Mammary epithelial cell (primary cell): ENCODE measurements at regions of chr13 and their contacts with region 1.

Region 1: DNA sequence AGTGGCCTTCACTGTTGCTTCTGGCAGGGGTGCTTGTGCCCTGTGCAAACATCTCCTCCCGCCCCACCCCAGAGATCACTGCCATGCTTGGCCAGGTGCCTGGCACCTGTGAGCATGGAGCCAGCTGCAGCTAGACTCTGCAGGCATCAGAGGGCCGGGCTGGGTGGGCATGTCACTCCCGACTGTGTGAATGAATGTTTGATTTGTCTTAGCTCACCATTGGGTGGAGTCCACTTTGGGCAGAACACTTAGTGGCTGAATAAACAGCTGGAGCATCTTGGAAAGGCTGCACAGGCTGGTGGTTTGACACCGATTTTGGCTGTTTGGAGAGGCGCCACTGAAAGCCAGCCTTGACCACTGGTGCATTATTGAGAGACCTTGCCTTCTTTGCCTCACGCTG is 267.3 kb downstream of the DLEU7 start:
- DNase-seq: no peak
- H3K4me3 ChIP-seq: no peak overlapping the region
- H3K27ac ChIP-seq: no peak overlapping the region
- H3K4me1 ChIP-seq: no peaks in the 10 kb centered on the region
- H3K27me3 ChIP-seq: peaks cover 3% of the 10 kb centered on the region
- CTCF ChIP-seq: no peak

Region 2: DNA sequence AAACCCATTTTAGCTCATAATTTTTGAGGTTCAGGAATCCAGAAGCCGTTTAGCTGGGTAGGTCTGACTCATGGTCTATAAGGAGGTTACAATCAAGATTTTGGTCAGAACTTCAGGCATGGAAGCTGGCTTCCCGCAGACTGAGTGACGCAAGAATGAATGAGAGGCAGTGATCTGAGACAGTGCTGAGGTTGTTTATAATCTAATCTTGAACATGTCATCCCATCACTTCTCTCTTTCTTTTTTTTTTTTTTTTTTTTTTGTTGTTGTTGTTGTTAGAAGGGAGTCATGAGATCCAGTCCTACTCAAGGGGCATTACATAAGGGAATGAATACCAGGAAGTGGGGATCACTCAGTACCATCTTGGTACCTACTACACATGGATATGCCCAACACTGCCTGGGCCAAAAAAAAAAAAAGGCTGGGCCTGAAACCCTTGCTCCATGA is 50.0 kb after region 1 on chr13:
- CTCF ChIA-PET with region 1: interaction called, 42 read pairs
- dilution Hi-C with region 1: no loop called
- in situ Hi-C with region 1: no loop called
- intact Hi-C with region 1: no loop called
- DNase-seq: peak; percentile 51
- H3K4me3 ChIP-seq: no peak overlapping the region
- H3K27ac ChIP-seq: no peak overlapping the region
- H3K4me1 ChIP-seq: no peaks in the 10 kb centered on the region
- H3K27me3 ChIP-seq: no peaks in the 10 kb centered on the region
- CTCF ChIP-seq: no peak

Region 3: GRCh38 chr13:50668049-50668448 is 91.9 kb after region 1 on chr13:
- CTCF ChIA-PET with region 1: no interaction called
- dilution Hi-C with region 1: no loop called
- in situ Hi-C with region 1: no loop called
- intact Hi-C with region 1: no loop called
- DNase-seq: no peak
- H3K4me3 ChIP-seq: no peak overlapping the region
- H3K27ac ChIP-seq: no peak overlapping the region
- H3K4me1 ChIP-seq: peaks cover 12% of the 10 kb centered on the region
- H3K27me3 ChIP-seq: no peaks in the 10 kb centered on the region
- CTCF ChIP-seq: no peak